SK-N-SH (cell line): ENCODE measurements at regions of chr1 and their contacts with region 1.

Region 1: DNA sequence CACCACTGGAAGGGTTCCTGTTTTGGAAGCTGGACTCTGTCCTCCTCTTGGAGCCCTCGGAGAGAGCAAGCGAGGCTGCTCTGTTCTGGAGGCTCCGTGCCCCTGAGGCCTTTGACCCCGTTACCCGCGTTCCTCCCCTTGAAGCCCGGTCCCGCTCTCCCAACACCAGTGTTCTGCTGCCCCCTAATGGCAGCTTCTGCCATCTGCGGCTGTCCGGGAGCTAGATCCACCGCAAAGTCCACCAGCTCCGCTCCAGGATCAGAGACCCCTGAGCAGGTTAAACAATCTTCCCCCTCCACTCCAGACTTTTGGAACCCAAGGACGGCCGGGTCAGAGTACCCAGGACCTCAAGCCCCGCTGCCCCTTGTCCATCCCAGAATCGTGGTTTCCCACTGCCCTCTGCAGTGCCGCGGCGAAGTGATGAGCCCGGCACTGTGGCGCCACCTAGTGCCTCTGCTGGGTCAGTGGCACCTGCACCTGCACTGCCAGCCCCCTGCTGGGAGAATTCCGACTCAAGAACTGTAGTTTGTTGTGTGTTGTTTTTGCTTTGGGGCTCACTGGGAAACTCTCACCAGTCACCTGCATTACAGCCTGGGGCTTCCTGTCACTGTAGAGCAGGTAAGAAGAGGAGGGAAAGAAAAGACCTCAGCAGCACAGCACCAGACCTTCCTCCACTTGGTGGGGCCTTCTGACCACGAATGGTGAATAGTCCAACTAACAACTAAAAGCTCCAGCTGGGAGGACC is 63.5 kb upstream of the NFASC start:
- DNase-seq: peak; percentile 89
- H3K4me3 ChIP-seq: peak overlapping the region; percentile 50 to 81
- H3K27ac ChIP-seq: no peak overlapping the region; a peak in 1 of 4 replicates
- H3K4me1 ChIP-seq: peaks cover 0 to 2% of the 10 kb centered on the region in 2 experiments; a peak in 1 of 4 replicates
- H3K27me3 ChIP-seq: 0 out of 2 replicates have a peak, but pooled peaks cover 2% of the 10 kb centered on the region
- CTCF ChIP-seq: peak; percentile 100
- EP300 ChIP-seq: no peak
- RAD21 ChIP-seq: peak; percentile 72

Region 2: DNA sequence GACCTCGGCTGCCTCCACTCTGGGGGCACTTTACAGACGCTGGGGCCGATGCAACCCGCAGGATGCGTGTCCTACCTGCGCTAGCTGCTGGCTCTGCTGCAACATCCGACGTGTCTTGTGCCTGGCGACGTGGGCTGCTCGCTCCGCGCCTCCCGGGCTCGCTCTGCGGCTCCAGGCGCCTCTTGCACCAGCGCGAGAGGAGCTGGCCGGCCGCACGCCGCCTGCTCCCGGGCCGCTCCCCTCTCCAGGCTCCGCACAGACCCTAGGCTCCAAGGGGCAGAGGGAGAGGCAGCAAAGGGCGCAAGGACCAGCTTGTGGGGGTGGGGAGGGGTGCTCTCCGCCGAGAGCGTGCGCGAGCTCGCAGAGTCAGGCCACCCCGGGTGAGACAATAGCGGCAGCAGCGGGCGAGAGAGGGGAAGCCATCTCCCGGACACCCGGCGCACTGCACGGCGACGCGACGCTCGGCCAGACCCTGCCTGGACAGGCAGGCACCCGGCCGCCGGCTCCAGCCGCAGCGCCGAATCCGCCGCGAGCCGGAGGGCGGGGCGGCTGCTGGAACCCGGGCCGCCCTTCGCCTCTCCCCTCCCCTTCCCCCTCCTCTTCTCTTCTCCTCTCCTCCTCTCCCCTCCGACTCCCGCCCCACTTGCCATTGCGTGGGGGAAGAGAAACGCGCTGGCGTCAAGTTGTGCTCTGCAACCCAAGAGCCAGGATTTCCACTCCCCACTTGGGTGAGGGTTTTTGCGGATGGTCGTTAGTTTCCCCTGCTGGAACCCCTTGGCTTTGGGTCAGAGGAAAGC is 312.6 kb before region 1 on chr1 and contains the start of gene PIK3C2B:
- CTCF ChIA-PET with region 1: interaction called, 16 read pairs
- POLR2A ChIA-PET with region 1: no interaction called
- DNase-seq: peak; percentile 97
- H3K4me3 ChIP-seq: peak within 1 kb of the TSS; percentile 72 to 79
- H3K27ac ChIP-seq: peak within 1 kb of the TSS; percentile 70 to 90
- H3K4me1 ChIP-seq: peaks cover 0 to 15% of the 10 kb centered on the region in 2 experiments; a peak in 3 of 4 replicates
- H3K27me3 ChIP-seq: no peaks in the 10 kb centered on the region
- CTCF ChIP-seq: peak; percentile 43
- EP300 ChIP-seq: no peak
- RAD21 ChIP-seq: peak; percentile 26
- polyA plus RNA-seq, gene PIK3C2B: 6.5 and 6.6 TPM in 2 replicates

Region 3: GRCh38 chr1:204560590-204561150 is 246.4 kb before region 1 on chr1:
- CTCF ChIA-PET with region 1: interaction called, 568 read pairs
- POLR2A ChIA-PET with region 1: interaction called, 6 read pairs
- DNase-seq: no peak
- H3K4me3 ChIP-seq: no peak overlapping the region
- H3K27ac ChIP-seq: no peak overlapping the region
- H3K4me1 ChIP-seq: no peaks in the 10 kb centered on the region; a peak in 1 of 4 replicates
- H3K27me3 ChIP-seq: no peaks in the 10 kb centered on the region
- CTCF ChIP-seq: no peak
- EP300 ChIP-seq: no peak
- RAD21 ChIP-seq: no peak

Region 4: DNA sequence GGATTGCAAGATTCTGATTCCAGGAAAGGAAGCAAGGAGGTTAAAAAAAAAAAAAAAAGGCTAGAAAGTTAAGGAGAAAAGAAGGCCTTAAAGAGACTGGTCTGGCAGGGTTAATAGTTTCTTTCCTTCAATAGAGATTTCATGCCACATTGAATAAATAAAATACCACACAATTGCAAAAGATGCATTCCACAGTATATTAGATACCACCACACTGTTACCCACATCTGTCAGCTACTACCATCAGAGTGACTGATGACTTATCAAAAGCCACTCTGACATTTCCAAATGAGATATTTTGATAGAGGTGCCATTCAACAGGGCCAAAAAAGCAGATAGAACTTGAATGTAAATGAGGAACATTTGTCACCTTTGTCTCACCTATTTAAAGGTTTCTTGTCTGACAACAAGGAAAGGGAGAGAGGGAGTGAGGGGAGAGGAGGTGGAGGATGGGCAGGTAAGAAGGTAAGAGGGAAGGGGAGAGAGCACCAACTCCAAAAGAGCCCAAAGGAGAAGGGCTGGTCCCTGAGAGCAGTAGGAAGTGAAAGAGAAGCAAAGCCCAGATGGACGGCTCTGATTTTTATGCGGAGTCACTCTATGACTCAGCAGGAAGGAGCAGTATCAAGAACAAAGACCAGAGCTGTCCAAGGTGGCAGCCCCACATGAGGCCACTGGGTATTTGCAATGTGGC is 159.9 kb before region 1 on chr1:
- CTCF ChIA-PET with region 1: interaction called, 24 read pairs
- POLR2A ChIA-PET with region 1: no interaction called
- DNase-seq: no peak
- H3K4me3 ChIP-seq: no peak overlapping the region
- H3K27ac ChIP-seq: no peak overlapping the region
- H3K4me1 ChIP-seq: peaks cover 0 to 5% of the 10 kb centered on the region in 2 experiments; a peak in 1 of 4 replicates
- H3K27me3 ChIP-seq: no peaks in the 10 kb centered on the region; the same call in 1 of the 2 replicates
- CTCF ChIP-seq: no peak
- EP300 ChIP-seq: no peak
- RAD21 ChIP-seq: no peak

Region 5: DNA sequence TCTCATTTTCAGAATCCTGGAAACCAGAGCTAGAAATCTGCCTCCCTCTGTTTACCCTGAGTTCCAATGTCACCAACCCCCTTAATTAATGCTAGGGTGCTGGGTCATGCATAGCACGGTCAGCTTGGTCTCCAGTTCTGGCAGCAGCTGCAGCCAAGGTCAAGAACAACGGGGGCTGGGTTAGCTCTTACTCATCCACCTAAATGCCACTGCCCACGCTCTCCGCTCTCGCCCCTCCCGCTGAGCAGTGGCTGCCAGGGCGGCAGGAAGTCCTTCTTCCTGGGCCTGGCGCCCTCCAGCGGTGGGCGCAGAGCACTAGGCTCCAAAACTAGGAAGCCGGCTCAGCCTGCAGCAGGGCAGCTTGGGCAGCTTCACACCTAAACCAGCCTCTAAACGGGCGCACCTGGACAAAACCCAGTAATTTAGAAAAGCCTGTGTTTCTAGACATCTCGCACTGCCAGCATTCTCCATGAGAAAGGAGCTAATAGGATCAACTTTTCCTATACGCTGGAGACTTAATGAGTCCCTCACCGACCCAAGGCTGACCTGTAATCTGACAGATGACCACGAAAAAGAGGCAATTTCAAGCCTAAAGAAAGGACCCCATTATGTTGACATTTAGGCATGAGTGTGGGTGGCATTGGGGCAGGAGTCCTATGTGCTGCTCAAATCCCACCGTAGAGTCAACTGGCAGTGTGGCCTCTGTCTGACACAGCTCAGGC is 43.2 kb before region 1 on chr1:
- CTCF ChIA-PET with region 1: interaction called, 97 read pairs
- POLR2A ChIA-PET with region 1: no interaction called
- DNase-seq: peak; percentile 81
- H3K4me3 ChIP-seq: peak overlapping the region in 1 of 2 experiments; percentile 7; a peak in 1 of 4 replicates
- H3K27ac ChIP-seq: no peak overlapping the region
- H3K4me1 ChIP-seq: peaks cover 0 to 9% of the 10 kb centered on the region in 2 experiments; a peak in 1 of 4 replicates
- H3K27me3 ChIP-seq: peaks cover 2% of the 10 kb centered on the region; the same call in 1 of the 2 replicates
- CTCF ChIP-seq: peak; percentile 73
- EP300 ChIP-seq: no peak
- RAD21 ChIP-seq: peak; percentile 82

Region 6: GRCh38 chr1:204858363-204858821 is 51.3 kb after region 1 on chr1:
- CTCF ChIA-PET with region 1: interaction called, 22 read pairs
- POLR2A ChIA-PET with region 1: no interaction called
- DNase-seq: no peak
- H3K4me3 ChIP-seq: no peak overlapping the region
- H3K27ac ChIP-seq: no peak overlapping the region
- H3K4me1 ChIP-seq: peaks cover 0 to 3% of the 10 kb centered on the region in 2 experiments; a peak in 1 of 4 replicates
- H3K27me3 ChIP-seq: no peaks in the 10 kb centered on the region; the same call in 1 of the 2 replicates
- CTCF ChIP-seq: no peak
- EP300 ChIP-seq: no peak
- RAD21 ChIP-seq: no peak

Region 7: DNA sequence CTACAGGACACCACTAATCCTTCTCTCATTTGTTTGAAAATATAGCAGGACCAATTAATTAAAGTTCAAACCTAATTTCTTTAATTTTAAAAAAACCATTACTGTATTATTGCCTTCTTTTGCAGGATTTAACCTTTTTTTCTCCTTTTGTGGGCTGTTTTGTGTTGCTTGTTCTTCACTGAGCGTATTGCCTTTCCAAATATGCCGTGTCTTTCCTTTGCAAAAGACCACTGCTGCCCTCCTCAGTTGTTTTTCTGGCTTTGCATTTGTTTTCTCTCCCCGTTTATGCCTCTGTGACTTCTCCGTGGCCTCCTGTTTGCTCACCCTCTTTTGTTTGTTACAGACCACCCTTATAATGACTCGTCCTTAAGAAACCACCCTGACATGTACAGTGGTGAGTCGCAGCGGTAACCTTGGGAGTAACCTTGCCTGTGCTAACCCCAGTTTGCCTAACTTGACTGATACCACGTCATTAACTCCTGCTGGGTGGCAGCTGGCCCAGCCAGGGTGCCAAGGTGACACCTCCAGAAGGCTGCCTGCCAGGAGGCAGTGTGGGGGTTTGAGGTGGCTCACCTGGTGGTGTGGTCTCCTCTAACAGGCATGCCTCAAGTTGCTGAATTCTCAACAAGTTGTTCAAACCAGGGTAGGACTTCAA is 154.8 kb after region 1 on chr1:
- CTCF ChIA-PET with region 1: interaction called, 24 read pairs
- POLR2A ChIA-PET with region 1: no interaction called
- DNase-seq: no peak
- H3K4me3 ChIP-seq: no peak overlapping the region
- H3K27ac ChIP-seq: no peak overlapping the region
- H3K4me1 ChIP-seq: no peaks in the 10 kb centered on the region; a peak in 1 of 4 replicates
- H3K27me3 ChIP-seq: no peaks in the 10 kb centered on the region; the same call in 1 of the 2 replicates
- CTCF ChIP-seq: no peak
- EP300 ChIP-seq: no peak
- RAD21 ChIP-seq: peak; percentile 25; the same call in 1 of the 2 replicates